Calu3 (cell line): ENCODE measurements at regions of chr21 and their contacts with region 1.

Region 1: GRCh38 chr21:41361786-41362604 is at the start of gene MX2:
- DNase-seq: peak; percentile 43
- H3K4me3 Mint-ChIP-seq: peak within 1 kb of the TSS; percentile 64
- H3K27ac Mint-ChIP-seq: peak within 1 kb of the TSS; percentile 79
- H3K4me1 Mint-ChIP-seq: peaks cover 23% of the 10 kb centered on the region
- H3K27me3 Mint-ChIP-seq: no peaks in the 10 kb centered on the region
- CTCF ChIP-seq: no peak
- total RNA-seq, gene MX2: 17.6 and 65.2 TPM in 2 replicates

Region 2: DNA sequence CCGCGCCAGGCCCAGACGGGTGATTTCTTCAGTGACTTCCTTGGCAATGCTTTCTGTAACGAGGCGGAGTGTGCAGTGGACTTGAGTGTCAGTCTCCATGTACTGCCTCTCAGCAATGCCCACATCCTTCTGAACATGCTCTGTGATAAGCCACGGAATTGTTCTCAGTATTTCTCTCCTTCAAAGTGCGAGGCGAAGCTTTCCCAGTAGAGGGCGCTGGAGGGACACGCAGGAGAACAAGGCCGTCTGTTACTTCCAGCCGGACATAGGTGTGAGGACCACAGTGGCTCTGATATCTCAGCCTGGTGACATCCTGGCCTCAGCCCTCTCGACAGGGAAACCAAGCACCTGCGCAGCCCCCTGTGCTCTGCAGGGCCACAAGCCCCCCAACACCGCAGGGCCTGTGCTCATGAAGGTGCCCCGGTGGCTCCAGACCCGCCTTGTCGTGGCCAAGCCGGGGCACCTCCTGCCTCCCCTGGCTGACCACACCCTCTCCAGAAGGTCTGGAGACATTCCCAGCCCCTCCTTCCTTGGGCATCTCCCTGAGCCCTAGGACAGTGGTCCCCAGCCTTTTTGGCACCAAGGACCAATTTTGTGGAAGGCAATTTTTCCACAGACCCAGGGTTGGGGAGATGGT is 240.1 kb before region 1 on chr21:
- CTCF ChIA-PET with region 1: no interaction called
- intact Hi-C with region 1: loop called (anchors 5 kb)
- DNase-seq: peak; percentile 83
- H3K4me3 Mint-ChIP-seq: no peak overlapping the region
- H3K27ac Mint-ChIP-seq: no peak overlapping the region
- H3K4me1 Mint-ChIP-seq: no peaks in the 10 kb centered on the region
- H3K27me3 Mint-ChIP-seq: peaks cover 56% of the 10 kb centered on the region
- CTCF ChIP-seq: peak; percentile 60

Region 3: GRCh38 chr21:41170442-41170841 is 191.6 kb before region 1 on chr21:
- CTCF ChIA-PET with region 1: no interaction called
- intact Hi-C with region 1: loop called (anchors 5 kb)
- DNase-seq: peak; percentile 76
- H3K4me3 Mint-ChIP-seq: peak overlapping the region; percentile 75
- H3K27ac Mint-ChIP-seq: peak overlapping the region; percentile 54
- H3K4me1 Mint-ChIP-seq: peaks cover 19% of the 10 kb centered on the region
- H3K27me3 Mint-ChIP-seq: no peaks in the 10 kb centered on the region
- CTCF ChIP-seq: peak; percentile 61

Region 4: GRCh38 chr21:41283211-41283818 is 78.7 kb before region 1 on chr21:
- CTCF ChIA-PET with region 1: interaction called, 55 read pairs
- intact Hi-C with region 1: loop called (anchors 1 kb)
- DNase-seq: peak; percentile 56
- H3K4me3 Mint-ChIP-seq: no peak overlapping the region
- H3K27ac Mint-ChIP-seq: no peak overlapping the region
- H3K4me1 Mint-ChIP-seq: no peaks in the 10 kb centered on the region
- H3K27me3 Mint-ChIP-seq: no peaks in the 10 kb centered on the region
- CTCF ChIP-seq: peak; percentile 42